Cardiac septum (tissue), 1 donor: ENCODE measurements at regions of chr16 and their contacts with region 1.

Region 1: GRCh38 chr16:87416826-87417527 is 24.8 kb downstream of the MAP1LC3B start:
- DNase-seq: no peak

Region 2: GRCh38 chr16:87550496-87550961 is 133.6 kb after region 1 on chr16:
- intact Hi-C with region 1: loop called (anchors 5 kb)
- DNase-seq: no peak

Region 3: GRCh38 chr16:87571136-87571867 is 154.3 kb after region 1 on chr16:
- intact Hi-C with region 1: loop called (anchors 5 kb)
- DNase-seq: no peak